GM18951 (cell line): ENCODE measurements at regions of chr1 and their contacts with region 1.

Region 1: GRCh38 chr1:235504496-235505222 is 407 bp upstream of the B3GALNT2 start:
- POLR2A ChIP-seq: peak; percentile 83

Region 2: GRCh38 chr1:235455823-235456222 is 48.8 kb before region 1 on chr1:
- in situ Hi-C with region 1: no loop called
- POLR2A ChIP-seq: no peak

Region 3: GRCh38 chr1:235783148-235783776 is 278.6 kb after region 1 on chr1:
- in situ Hi-C with region 1: loop called (anchors 25 kb)
- POLR2A ChIP-seq: no peak

Region 4: GRCh38 chr1:235971571-235972310 is 467.1 kb after region 1 on chr1:
- in situ Hi-C with region 1: loop called (anchors 25 kb)
- POLR2A ChIP-seq: peak; percentile 57

Region 5: DNA sequence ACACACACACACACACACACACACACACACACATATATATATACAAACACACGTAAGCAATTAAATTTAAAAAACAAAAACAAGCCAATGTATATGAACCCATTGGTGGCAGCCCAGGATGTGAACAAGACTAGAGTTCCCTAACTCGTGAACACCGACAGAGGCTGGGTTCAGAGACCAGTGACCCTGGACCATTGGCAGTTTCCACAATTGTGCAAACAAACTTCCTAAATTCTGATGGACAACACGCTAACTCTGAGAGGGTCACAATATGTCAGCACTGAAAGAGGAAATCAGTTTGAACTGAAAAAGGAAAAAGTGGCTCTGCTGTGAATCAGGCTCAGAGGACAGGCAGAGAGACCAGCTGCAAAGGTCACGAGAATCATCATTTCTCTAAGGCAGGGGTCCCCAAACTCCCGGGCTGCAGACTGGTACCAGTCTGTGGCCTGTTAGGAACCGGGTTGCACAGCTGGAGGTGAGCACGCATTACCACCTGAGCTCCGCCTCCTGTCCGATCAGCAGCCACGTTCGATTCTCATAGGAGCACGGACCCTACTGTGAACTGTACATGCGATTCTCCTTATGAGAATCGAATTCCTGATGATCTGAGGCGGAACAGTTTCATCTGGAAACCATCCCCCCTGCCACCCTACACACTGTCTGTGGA is 827.6 kb after region 1 on chr1:
- in situ Hi-C with region 1: no loop called
- POLR2A ChIP-seq: no peak